ENCODE measurements at regions of chr11 and their contacts with region 1.

Region 1: DNA sequence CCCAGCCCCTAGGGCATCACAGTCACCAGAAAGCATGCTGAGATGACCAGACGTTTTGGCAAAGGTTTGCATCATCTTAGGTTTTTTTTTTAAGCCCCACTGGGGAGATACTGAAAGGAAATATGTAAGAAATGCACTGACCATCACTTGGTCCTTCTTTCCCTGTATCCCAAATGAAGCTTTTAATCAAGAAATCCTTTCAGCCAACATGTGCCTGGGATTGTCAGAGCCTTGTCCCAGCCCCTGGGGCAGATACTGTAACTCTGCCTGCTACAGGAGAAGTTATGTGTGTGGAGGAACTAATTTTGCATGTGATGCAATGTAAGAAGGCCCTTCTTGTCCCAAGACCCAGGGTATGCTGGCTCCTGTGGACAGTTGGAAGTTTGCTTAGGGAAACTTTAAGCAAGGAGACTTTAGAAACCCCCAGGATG is 65.6 kb downstream of the PPFIBP2 start:
- DNase-seq: no peak
- H3K4me3 ChIP-seq: no peak overlapping the region
- CTCF ChIP-seq: no peak

Region 2: DNA sequence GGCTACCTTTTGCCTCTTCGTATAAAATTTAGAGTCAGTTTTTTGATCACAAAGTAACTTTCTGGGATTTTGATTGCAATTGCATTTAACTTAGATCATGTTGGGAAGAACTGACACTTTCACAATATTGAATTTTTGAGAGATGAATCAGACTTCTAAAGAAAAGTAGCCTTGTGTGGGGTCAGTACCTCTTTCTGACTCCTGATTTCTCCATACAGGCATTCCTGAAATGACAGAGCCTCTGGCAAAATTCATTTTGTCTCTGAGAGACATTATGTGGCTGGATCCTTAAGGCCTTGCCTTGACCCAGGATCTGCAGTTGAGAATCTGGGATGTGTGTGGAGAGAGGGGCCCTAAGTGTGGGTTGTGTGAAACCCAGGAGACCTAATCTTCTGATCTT is 27.8 kb before region 1 on chr11:
- CTCF ChIA-PET with region 1: no interaction called
- POLR2A ChIA-PET with region 1: no interaction called
- DNase-seq: no peak
- H3K4me3 ChIP-seq: no peak overlapping the region
- CTCF ChIP-seq: no peak

Region 3: DNA sequence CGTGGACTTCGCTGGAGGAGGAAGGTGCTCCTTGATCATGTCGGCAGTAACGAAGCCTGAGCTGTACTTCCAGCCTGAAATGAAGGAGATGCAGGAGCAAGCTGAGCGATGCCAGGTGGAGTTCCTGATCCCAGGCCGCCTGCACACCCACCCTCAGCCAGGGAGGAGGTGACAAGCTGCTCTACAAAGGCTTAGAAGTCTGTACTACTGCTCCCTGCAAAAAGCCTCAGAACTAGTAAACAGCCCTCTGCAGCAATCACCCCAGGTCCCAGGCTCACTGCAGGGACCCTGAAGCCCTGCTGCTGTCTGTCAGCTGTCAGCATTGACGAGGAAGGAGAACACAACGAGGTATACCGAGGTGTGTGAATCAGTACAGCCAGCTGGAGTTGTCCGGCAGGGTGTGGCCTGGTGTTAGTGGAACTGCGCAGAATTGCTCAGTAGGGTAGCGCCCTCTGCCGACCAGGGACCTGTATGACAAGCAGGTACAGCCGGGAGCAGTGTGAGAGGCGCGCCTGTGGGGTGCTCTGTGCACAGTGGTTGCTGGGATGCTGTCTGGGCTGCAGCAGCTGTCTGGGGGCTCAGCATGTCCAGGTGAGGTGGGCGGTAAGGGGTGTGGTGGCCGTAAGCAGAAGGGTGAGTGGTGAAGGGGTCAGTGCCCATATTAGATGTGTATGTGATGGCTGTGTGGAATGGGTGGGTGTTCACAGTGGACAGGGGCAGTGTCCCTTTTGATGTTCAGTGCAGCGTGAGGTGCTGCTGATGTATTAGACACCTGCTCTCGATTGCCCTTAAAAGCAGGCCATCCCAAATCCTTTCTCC is 86.3 kb after region 1 on chr11:
- CTCF ChIA-PET with region 1: interaction called, 185 read pairs
- POLR2A ChIA-PET with region 1: no interaction called
- DNase-seq: no peak
- H3K4me3 ChIP-seq: no peak overlapping the region
- CTCF ChIP-seq: peak; percentile 86